ENCODE measurements at regions of chr17 and their contacts with region 1.

Region 1: GRCh38 chr17:56715613-56716357 is 117.9 kb downstream of the C17orf67 start:
- DNase-seq: peak; percentile 90
- ATAC-seq: peak; percentile 99
- H3K4me3 Mint-ChIP-seq: no peak overlapping the region
- H3K27ac Mint-ChIP-seq: no peak overlapping the region
- H3K4me1 Mint-ChIP-seq: no peaks in the 10 kb centered on the region
- H3K27me3 Mint-ChIP-seq: no peaks in the 10 kb centered on the region
- CTCF ChIP-seq: peak; percentile 83

Region 2: DNA sequence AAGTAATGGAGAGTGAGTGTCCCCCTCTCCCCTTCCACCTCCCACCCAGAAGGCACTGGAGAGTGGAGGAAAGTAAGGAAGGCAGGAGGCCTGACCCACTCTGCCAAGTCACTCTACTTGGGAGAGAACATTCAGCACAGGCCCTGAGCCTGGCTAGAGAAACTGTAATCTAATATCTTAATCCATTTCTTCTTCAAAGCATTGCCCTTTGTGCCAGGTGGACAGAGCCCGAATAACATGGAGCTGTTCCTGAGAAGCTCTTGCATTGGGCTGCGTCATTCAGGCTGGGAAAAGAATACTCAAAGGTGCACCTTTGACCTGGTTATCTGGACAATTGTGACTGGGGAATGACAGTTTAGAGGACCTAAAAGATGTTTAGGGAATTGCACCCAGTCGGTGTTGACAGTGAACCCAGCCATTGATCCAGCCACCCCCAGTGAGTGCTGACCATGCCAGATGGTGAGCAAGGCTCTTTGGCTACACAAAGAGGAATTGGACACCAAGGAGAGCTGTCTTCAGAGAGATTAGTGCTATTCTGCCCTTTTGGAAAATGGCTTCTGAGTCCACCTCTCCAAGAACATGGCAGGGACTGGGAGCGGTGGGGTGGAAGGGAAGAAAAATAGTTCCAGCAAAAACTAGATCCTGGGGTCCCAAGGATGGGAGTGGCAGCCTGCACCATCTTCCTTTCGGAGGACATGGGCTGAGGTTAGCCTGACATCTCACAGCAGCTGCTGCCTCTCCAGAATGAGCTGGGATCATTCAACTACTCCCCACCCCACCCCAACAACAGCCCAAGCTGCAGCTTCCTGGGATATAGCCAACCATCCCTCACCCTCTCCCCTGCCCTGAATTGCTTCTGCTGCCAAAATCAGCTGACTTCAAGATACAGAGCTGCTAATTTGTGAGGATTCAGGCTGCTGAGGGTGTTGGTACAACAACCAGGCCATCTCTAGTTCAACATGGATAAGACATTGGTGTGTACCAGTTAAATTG is 133.9 kb before region 1 on chr17:
- CTCF ChIA-PET with region 1: interaction called, 24 read pairs
- POLR2A ChIA-PET with region 1: no interaction called
- intact Hi-C with region 1: no loop called
- DNase-seq: no peak
- ATAC-seq: no peak
- H3K4me3 Mint-ChIP-seq: no peak overlapping the region
- H3K27ac Mint-ChIP-seq: no peak overlapping the region
- H3K4me1 Mint-ChIP-seq: no peaks in the 10 kb centered on the region
- H3K27me3 Mint-ChIP-seq: peaks cover 9% of the 10 kb centered on the region
- CTCF ChIP-seq: no peak

Region 3: DNA sequence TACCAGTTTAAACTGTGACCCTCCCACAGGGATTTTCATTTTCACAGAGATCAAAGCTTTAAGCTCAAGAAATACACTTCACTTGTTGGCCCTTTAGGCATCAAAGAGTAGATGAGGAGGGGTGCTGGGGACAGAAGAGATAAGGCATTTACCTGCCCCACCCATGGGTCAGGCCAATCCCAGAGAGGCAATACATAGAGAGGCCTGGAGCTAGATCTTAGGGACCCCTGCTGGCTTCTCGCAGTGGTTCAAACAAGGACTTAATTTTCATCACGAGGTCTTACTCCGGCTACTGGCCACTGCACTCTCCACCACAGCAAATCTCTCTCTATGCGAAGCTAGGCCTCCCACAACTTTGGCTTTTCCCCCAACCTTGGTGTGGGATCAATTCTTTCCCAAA is 75.7 kb before region 1 on chr17:
- CTCF ChIA-PET with region 1: interaction called, 13 read pairs
- POLR2A ChIA-PET with region 1: no interaction called
- intact Hi-C with region 1: no loop called
- DNase-seq: no peak
- ATAC-seq: no peak
- H3K4me3 Mint-ChIP-seq: no peak overlapping the region
- H3K27ac Mint-ChIP-seq: no peak overlapping the region
- H3K4me1 Mint-ChIP-seq: peaks cover 7% of the 10 kb centered on the region
- H3K27me3 Mint-ChIP-seq: no peaks in the 10 kb centered on the region
- CTCF ChIP-seq: no peak

Region 4: GRCh38 chr17:56699186-56699895 is 16.4 kb before region 1 on chr17:
- CTCF ChIA-PET with region 1: interaction called, 14 read pairs
- POLR2A ChIA-PET with region 1: no interaction called
- intact Hi-C with region 1: no loop called
- DNase-seq: no peak
- ATAC-seq: no peak
- H3K4me3 Mint-ChIP-seq: no peak overlapping the region
- H3K27ac Mint-ChIP-seq: no peak overlapping the region
- H3K4me1 Mint-ChIP-seq: no peaks in the 10 kb centered on the region
- H3K27me3 Mint-ChIP-seq: no peaks in the 10 kb centered on the region
- CTCF ChIP-seq: no peak

Region 5: DNA sequence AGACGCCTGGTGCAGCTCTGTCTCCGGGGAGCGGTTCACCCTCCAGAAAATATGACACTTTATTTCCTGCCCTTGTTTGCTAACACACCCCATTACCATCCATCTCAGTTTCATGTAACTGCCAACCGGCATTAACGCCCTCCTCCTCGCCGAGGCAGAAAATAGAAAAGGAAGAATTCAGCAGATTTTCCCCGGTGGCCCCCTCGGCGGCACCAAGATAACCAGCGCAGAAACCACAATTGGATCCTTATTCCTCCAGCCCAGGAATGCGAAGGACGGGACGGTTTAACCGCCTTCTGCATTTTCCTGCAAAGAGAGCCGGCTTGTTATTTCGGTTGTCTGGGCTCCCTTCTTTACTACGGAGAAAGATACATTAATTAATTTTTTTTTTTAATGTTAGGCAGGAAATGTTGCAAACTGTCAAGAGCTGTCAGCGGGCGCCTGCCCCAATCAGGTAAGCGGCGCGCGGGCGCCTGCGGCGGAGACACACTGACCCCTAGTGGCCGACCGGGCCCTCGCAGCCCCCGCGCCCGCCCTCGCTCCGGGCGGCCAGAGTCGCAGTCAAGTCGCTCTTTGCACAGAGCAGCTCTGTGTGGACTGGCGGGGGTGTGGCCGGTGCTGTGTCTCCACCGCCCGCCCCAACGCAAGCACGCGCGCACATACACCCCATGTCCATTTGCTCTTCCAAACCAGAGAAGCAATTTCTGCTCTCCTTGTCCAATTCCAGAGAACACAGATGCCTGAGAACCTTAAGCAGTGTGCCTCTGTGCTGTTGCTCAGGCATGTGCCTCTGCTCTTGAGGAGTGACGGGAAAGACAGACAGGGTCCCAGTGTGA is 64.3 kb after region 1 on chr17:
- CTCF ChIA-PET with region 1: interaction called, 55 read pairs
- POLR2A ChIA-PET with region 1: interaction called, 5 read pairs
- intact Hi-C with region 1: loop called (anchors 2 kb)
- DNase-seq: peak; percentile 89
- ATAC-seq: peak; percentile 94
- H3K4me3 Mint-ChIP-seq: peak overlapping the region; percentile 75
- H3K27ac Mint-ChIP-seq: peak overlapping the region; percentile 85
- H3K4me1 Mint-ChIP-seq: peaks cover 27% of the 10 kb centered on the region
- H3K27me3 Mint-ChIP-seq: no peaks in the 10 kb centered on the region
- CTCF ChIP-seq: peak; percentile 99

Region 6: GRCh38 chr17:57697891-57698711 is 982.3 kb after region 1 on chr17:
- CTCF ChIA-PET with region 1: no interaction called
- POLR2A ChIA-PET with region 1: no interaction called
- intact Hi-C with region 1: no loop called
- DNase-seq: peak; percentile 54
- ATAC-seq: peak; percentile 69
- H3K4me3 Mint-ChIP-seq: no peak overlapping the region
- H3K27ac Mint-ChIP-seq: no peak overlapping the region
- H3K4me1 Mint-ChIP-seq: peaks cover 6% of the 10 kb centered on the region
- H3K27me3 Mint-ChIP-seq: no peaks in the 10 kb centered on the region
- CTCF ChIP-seq: no peak